ENCODE measurements at regions of chr11 and their contacts with region 1.

Region 1: DNA sequence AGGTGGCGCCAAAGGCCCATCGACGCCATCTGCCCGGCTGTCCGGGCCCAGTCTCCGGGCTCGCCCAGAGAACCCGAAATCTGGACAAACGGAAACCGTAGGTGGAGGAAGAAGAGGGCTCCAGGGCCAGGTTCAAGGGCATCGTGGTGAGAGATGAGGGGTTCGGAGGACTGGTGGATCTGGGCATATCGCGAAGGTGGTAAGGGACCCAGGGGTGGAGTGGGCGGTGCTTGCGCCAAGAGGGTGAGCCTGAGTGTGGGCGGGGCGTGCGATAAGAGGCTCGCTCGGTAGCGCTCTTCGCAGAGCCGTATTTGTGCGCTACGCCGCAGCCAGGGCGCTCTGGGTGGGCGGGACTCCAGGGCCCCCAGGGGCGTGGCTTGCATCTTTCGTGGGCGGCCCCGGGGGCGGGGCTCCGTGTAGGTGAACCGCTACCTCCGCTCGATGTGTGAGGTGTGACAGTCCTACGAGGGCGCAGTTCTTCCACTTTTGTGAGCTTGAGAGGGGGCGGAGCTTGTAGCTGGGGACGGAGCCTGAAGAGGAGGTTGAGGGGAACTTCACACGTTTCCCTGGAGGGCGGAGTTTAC is 4.8 kb downstream of the CD248 start:
- DNase-seq: peak; percentile 93
- H3K4me3 Mint-ChIP-seq: peak overlapping the region; percentile 95
- H3K27ac Mint-ChIP-seq: peak overlapping the region; percentile 94
- H3K4me1 Mint-ChIP-seq: peaks cover 14% of the 10 kb centered on the region
- H3K27me3 Mint-ChIP-seq: peaks cover 3% of the 10 kb centered on the region

Region 2: DNA sequence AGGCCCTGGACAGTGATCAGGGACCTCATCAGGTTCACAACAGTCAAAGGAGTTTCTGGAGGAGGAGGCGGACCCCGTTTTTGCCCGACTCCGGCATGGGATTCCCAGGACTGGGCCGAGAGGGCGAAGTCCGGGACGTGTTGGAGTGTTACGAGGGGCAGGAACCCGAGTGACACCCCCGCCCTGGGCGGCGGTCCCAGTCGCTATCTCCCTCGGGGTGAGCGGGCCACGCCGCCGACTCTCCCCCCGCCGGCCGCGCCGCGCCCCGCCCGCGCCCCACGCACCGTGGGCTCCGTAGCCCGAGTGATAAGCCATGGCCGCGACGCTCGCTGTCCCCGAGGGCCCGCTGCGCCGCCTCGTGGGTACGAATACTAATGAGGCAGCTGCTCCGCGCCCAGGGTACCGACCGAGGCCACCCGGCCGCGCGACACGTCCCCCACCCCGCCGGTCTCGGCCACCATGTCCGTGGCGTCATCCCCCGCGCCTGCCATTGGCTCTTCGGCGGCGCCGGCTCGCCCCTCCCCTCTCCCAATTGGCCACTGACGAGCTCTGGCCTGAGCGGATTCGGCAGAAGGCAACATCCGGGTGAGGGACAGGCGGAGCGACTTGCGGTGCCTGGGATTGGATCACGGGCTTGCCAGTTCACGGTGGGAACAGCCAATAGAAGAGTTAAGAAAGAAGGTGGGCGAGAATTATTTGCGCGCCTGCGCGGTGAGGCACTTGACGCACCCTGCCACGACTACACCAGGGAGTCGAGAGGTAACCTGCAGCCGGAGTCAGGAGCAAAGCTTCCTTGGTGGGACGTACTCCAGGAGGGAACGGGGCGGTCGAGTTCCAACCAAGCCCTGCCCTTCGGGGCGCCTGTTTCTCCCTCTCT is 23.1 kb before region 1 on chr11 and contains the start of gene YIF1A:
- intact Hi-C with region 1: loop called (anchors 1 kb)
- DNase-seq: peak; percentile 99
- H3K4me3 Mint-ChIP-seq: peak within 1 kb of the TSS; percentile 95
- H3K27ac Mint-ChIP-seq: peak within 1 kb of the TSS; percentile 99
- H3K4me1 Mint-ChIP-seq: peaks cover 39% of the 10 kb centered on the region
- H3K27me3 Mint-ChIP-seq: peaks cover 28% of the 10 kb centered on the region
- total RNA-seq, gene YIF1A: 125 and 127 TPM in 2 replicates

Region 3: GRCh38 chr11:66344550-66345315 is 32.7 kb after region 1 on chr11 and contains the start of gene BRMS1:
- intact Hi-C with region 1: loop called (anchors 1 kb)
- DNase-seq: peak; percentile 94
- H3K4me3 Mint-ChIP-seq: peak within 1 kb of the TSS; percentile 97
- H3K27ac Mint-ChIP-seq: peak within 1 kb of the TSS; percentile 95
- H3K4me1 Mint-ChIP-seq: peaks cover 46% of the 10 kb centered on the region
- H3K27me3 Mint-ChIP-seq: peaks cover 2% of the 10 kb centered on the region
- total RNA-seq, gene BRMS1: 63.1 and 67.1 TPM in 2 replicates

Region 4: GRCh38 chr11:66386171-66387069 is 74.4 kb after region 1 on chr11:
- intact Hi-C with region 1: loop called (anchors 1 kb)
- DNase-seq: peak; percentile 71
- H3K4me3 Mint-ChIP-seq: no peak overlapping the region
- H3K27ac Mint-ChIP-seq: peak overlapping the region; percentile 2
- H3K4me1 Mint-ChIP-seq: peaks cover 10% of the 10 kb centered on the region
- H3K27me3 Mint-ChIP-seq: peaks cover 2% of the 10 kb centered on the region

Region 5: DNA sequence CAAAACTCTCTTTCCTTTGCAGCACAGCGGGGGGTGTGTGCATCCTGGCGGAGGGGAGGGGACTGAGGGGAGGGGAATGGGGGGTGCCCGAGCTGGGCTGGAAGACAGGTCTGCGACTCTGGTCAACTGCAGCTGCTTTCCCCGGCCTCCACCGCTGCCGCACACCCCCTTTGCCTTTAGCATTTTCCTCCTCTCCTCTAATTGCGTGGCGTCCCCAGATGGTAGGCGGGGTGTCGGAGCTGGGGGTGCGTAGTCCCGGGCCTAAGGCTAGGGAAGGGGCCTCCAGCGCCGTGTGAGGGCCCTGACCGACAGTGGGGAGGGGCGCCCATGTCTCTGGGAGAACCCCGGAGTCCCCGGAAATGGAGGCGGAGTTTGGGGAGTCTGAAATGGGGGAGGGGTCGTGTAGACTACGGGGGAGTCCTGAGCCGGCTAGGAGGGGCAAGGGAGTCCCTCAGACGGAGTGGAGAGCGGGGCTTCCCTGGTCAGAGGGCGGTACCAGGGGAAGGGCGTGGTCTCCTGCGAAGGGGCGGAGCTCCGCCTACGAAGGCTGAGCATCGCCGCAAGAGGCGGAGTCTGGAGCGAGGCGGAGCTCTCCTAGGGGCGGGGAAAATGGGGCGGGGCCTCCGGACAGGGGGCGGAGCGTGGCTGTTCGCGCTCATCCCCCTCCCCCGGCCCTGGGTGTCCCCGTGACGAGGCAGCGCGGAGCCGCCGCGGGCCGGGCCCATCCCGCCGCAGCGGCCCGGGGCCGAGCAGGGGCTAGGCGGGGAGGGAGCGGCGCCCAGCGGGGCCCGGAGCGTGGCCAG is 154.4 kb after region 1 on chr11 and contains the start of gene PELI3:
- intact Hi-C with region 1: loop called (anchors 1 kb)
- DNase-seq: peak; percentile 86
- H3K4me3 Mint-ChIP-seq: peak within 1 kb of the TSS; percentile 94
- H3K27ac Mint-ChIP-seq: peak within 1 kb of the TSS; percentile 88
- H3K4me1 Mint-ChIP-seq: peaks cover 28% of the 10 kb centered on the region
- H3K27me3 Mint-ChIP-seq: no peaks in the 10 kb centered on the region
- total RNA-seq, gene PELI3: 15.3 and 15.8 TPM in 2 replicates

Measured in activated T-helper 1 cell treated with anti-CD3 and anti-CD28 coated beads, Interleukin-12 subunit alpha, Interleukin-12 subunit beta, Interleukin-2, Interleukin-4 antibody, amounts not matched to agents 30 ng/mL and 10 ng/mL and 1 ng/mL, durations not matched to agents 14 hours and 24 hours and 36 hours (primary cell).